ENCODE measurements at regions of chr22 and their contacts with region 1.

Region 1: GRCh38 chr22:37777122-37777687 is 30.5 kb upstream of the GCAT start:
- DNase-seq: peak; percentile 48 to 62
- ATAC-seq: peak; percentile 56 to 71
- H3K4me3 ChIP-seq: no peak overlapping the region
- H3K27ac ChIP-seq: no peak overlapping the region
- H3K4me1 ChIP-seq: peaks cover 7 to 8% of the 10 kb centered on the region in 2 donors
- H3K27me3 ChIP-seq: no peaks in the 10 kb centered on the region
- CTCF ChIP-seq: no peak
- POLR2A ChIP-seq: no peak

Region 2: DNA sequence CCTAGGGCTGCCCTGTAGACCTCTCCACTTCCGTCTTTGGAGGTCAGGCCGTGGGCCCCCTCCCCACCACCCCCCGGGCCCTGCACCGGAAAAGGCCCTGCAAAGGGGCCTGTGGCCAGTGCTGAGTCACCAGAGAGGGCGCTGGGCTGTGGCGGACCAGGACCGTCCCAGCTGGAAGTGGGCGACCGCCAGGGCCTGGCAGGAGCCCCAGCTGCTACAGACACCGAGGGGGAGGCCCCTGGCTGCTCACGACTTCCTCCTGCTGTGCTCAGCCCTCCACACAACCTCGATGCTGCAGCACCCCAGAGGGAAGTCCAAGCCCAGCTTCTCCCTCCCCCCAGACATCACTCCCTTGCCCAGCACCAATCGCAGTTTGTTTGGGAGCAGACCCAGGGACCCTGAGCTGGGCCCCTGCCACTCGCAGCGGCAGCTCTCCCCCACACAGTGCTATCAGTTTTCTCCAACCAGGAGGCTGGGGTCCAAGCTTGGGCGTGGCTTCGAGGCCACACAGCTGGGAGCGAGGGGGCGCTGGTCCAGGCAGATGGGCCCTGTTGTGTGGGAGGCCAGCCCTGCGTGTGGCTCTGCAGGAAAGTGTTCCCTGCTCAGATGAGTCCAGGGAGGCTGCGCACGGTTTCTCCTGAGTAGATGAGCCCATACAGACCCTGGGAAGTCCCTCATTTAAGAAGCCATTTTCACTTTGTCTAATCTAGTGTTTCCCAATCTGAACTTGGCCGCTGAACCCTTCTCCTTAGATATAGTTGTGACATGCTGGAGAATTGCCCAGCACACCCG is 143.4 kb before region 1 on chr22:
- in situ Hi-C with region 1: loop called in 1 of 4 experiments (anchors 25 kb)
- intact Hi-C with region 1: no loop called
- DNase-seq: peak; percentile 52 to 78
- ATAC-seq: peak; percentile 56 to 62
- H3K4me3 ChIP-seq: peak overlapping the region; percentile 15 to 48 (median 32)
- H3K27ac ChIP-seq: peak overlapping the region; percentile 56 to 82 (median 74)
- H3K4me1 ChIP-seq: peaks cover 23 to 26% of the 10 kb centered on the region in 2 donors
- H3K27me3 ChIP-seq: peaks cover 0 to under 1% (median 0%) of the 10 kb centered on the region in 3 donors
- CTCF ChIP-seq: peak in 1 of 5 experiments; percentile 29
- POLR2A ChIP-seq: no peak

Region 3: DNA sequence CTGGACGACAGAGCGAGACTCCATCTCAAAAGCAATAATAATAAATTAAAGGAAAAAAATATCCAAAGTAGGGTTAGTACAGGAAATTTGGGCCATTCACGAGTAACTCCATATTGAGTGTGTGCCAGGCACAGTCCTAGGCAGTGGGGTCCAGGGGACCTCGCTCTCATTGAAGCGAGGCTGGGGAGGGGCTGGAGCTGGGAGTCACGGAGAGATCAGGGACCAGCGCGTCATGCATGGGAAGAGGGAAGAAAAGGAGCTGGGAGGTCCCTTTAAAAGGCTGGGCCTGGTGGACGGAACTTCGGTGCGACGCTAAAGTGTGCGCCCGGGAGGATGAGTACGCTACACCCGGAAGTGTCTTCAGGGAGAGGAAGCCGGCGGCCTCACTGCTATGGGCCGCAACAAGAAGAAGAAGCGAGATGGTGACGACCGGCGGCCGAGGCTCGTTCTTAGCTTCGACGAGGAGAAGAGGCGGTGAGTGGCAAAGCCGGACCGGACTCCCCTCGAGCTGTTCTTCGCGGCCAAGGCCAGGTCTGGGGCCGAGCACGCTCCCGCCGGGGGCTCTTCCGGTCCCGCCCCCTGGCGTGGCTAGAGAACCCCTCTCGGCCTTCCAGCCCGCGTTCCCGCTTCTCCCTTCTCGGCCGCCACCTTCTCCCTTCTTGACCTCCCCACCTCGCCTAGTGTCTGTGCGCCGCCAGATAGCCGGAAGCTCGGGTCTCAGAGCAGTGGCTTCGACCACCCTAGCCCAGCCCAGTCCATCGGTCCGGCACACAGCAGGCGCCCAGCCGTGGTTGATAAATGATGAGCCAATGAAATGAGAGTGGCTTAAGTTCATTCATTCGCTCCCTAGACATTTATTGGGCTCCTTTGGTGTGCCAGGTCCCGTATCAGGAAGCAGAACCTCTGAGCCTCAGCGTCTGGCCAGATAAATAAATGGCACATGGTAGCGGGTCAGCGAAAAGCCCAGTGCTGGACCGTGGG is 90.9 kb before region 1 on chr22 and contains the start of gene NOL12:
- in situ Hi-C with region 1: no loop called
- intact Hi-C with region 1: no loop called
- DNase-seq: peak; percentile 64 to 78
- ATAC-seq: peak; percentile 93 to 95
- H3K4me3 ChIP-seq: peak within 1 kb of the TSS; percentile 96 to 100 (median 96)
- H3K27ac ChIP-seq: peak within 1 kb of the TSS; percentile 91 to 99 (median 96)
- H3K4me1 ChIP-seq: peaks cover 16 to 18% of the 10 kb centered on the region in 2 donors
- H3K27me3 ChIP-seq: no peaks in the 10 kb centered on the region
- CTCF ChIP-seq: no peak
- POLR2A ChIP-seq: peak; percentile 28 to 45
- total RNA-seq, gene NOL12: 10.0 to 21.7 (median 16.6) TPM

Measured in gastrocnemius medialis (tissue), 4 donors.